ENCODE measurements at regions of chr10 and their contacts with region 1.

Region 1: DNA sequence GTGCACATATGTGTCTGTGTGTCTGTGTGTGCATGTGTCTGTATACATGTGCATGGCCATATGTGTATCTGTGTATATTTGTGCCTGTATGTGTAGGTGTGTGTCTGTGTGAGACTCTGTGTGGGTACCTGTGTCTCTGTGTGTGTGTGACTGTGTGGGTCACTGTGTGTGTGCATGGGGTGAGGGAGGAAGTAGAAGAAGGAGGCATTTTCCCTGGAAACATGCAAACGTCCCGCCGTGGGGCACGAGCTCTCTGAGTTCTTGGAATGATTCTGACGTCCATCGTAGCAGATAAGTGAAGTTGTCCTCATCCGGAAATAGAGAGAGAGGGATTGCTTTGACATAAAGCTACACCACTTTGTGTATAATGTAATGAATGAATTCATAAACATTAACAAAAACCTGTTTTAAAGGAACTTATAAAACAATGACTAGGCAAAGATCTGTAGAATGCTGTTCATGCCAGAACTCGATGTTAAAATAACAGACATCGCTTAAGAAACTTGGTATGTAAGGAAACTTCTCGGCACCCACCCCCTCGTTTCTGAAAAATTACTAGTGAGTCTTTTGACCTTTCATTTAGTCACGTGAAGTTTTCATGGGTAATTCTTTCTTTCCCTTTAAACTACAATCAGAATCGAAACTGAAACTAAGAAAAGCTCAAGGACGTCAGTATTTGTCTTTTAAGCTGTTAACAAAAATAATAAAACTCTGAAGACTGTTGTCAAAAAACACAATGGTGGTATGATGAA is 43.6 kb upstream of the KLF6 start:
- DNase-seq: no peak
- H3K4me3 ChIP-seq: no peak overlapping the region
- H3K4me3 Mint-ChIP-seq: peak overlapping the region; percentile 53
- H3K27ac Mint-ChIP-seq: peak overlapping the region; percentile 94
- H3K4me1 ChIP-seq: peaks cover 84% of the 10 kb centered on the region
- H3K4me1 Mint-ChIP-seq: peaks cover 70% of the 10 kb centered on the region
- H3K27me3 ChIP-seq: no peaks in the 10 kb centered on the region
- H3K27me3 Mint-ChIP-seq: no peaks in the 10 kb centered on the region
- CTCF ChIP-seq: no peak

Region 2: DNA sequence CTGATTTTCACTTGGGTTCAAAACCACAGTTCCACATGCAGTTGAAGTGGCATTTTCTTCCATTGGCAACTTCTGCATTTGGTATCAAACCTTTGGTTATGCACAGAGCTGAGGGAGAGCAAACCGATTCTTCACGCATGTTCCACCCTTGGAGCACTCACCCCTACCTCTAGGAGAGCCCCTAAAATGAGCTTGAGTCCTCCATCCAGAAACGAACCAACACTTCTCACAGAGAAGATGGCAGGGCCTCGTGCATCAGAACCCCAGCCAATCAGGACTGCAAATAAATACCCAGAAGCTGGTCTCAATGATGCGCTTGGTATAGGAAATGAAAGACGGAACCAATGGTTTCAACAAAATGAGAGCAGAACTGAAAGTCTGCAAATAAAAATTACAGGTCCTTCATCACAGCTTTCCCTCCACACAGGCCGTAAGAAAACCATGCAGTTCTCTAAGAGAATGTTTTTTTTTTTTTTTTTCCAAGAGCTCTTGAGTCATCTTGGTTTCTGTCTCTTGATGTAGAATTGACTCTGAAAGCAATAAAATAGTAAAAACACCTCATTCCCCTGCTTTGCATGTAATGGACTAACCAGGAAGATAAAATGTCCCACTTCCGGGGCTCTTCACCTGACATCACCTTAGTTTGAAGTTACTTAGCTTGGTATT is 67.4 kb before region 1 on chr10:
- CTCF ChIA-PET with region 1: no interaction called
- POLR2A ChIA-PET with region 1: no interaction called
- intact Hi-C with region 1: loop called (anchors 1 kb)
- DNase-seq: no peak
- H3K4me3 ChIP-seq: no peak overlapping the region
- H3K4me3 Mint-ChIP-seq: peak overlapping the region; percentile 86
- H3K27ac Mint-ChIP-seq: peak overlapping the region; percentile 78
- H3K4me1 ChIP-seq: peaks cover 94% of the 10 kb centered on the region
- H3K4me1 Mint-ChIP-seq: peaks cover 80% of the 10 kb centered on the region
- H3K27me3 ChIP-seq: no peaks in the 10 kb centered on the region
- H3K27me3 Mint-ChIP-seq: no peaks in the 10 kb centered on the region
- CTCF ChIP-seq: no peak

Region 3: DNA sequence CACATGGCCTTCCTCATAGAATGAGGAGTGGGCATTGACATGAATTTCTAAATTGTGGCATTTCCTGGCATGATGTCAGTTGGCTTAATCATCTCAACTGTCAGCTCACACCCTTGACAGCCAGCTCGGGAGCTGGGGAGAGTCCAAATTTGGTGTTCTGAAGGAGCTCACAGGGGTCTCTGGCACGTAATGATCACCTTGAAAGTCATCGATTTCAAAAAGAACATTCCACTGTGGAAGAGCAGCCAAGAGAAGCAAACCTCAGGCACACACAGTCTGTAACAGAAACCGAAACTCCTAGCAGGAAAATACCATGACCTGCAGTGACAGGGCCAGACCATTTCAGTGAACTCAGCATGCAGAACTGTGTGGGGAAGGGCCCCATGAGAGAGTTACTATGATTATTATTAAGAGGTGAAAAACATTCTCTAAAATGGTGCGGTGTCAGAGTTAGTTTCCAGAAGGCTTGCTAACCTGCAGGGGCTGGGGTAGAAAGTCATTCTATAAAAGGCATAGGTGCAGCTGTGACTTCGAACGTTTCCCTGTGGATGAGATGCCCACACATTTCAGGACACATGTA is 17.2 kb before region 1 on chr10:
- CTCF ChIA-PET with region 1: interaction called, 3 read pairs
- POLR2A ChIA-PET with region 1: interaction called, 8 read pairs
- intact Hi-C with region 1: loop called (anchors 1 kb)
- DNase-seq: no peak
- H3K4me3 ChIP-seq: no peak overlapping the region
- H3K4me3 Mint-ChIP-seq: peak overlapping the region; percentile 20
- H3K27ac Mint-ChIP-seq: peak overlapping the region; percentile 84
- H3K4me1 ChIP-seq: peaks cover 73% of the 10 kb centered on the region
- H3K4me1 Mint-ChIP-seq: peaks cover 67% of the 10 kb centered on the region
- H3K27me3 ChIP-seq: no peaks in the 10 kb centered on the region
- H3K27me3 Mint-ChIP-seq: no peaks in the 10 kb centered on the region
- CTCF ChIP-seq: no peak

Region 4: GRCh38 chr10:3881636-3882035 is 53.1 kb after region 1 on chr10:
- CTCF ChIA-PET with region 1: no interaction called
- POLR2A ChIA-PET with region 1: interaction called, 4 read pairs
- intact Hi-C with region 1: loop called (anchors 2 kb)
- DNase-seq: peak; percentile 74 to 80
- H3K4me3 ChIP-seq: no peak overlapping the region
- H3K4me3 Mint-ChIP-seq: peak overlapping the region; percentile 48
- H3K27ac Mint-ChIP-seq: peak overlapping the region; percentile 80
- H3K4me1 ChIP-seq: peaks cover 44% of the 10 kb centered on the region
- H3K4me1 Mint-ChIP-seq: peaks cover 48% of the 10 kb centered on the region
- H3K27me3 ChIP-seq: no peaks in the 10 kb centered on the region
- H3K27me3 Mint-ChIP-seq: no peaks in the 10 kb centered on the region
- CTCF ChIP-seq: no peak

Measured in Caco-2 (cell line).